Posterior vena cava (tissue), 2 donors: ENCODE measurements at regions of chr16 and their contacts with region 1.

Region 1: GRCh38 chr16:89489040-89489721 is 1.2 kb downstream of the ANKRD11 start:
- DNase-seq: peak; percentile 95

Region 2: GRCh38 chr16:89410794-89411309 is 78.3 kb before region 1 on chr16:
- intact Hi-C with region 1: loop called (anchors 5 to 10 kb)
- DNase-seq: peak; percentile 87

Region 3: DNA sequence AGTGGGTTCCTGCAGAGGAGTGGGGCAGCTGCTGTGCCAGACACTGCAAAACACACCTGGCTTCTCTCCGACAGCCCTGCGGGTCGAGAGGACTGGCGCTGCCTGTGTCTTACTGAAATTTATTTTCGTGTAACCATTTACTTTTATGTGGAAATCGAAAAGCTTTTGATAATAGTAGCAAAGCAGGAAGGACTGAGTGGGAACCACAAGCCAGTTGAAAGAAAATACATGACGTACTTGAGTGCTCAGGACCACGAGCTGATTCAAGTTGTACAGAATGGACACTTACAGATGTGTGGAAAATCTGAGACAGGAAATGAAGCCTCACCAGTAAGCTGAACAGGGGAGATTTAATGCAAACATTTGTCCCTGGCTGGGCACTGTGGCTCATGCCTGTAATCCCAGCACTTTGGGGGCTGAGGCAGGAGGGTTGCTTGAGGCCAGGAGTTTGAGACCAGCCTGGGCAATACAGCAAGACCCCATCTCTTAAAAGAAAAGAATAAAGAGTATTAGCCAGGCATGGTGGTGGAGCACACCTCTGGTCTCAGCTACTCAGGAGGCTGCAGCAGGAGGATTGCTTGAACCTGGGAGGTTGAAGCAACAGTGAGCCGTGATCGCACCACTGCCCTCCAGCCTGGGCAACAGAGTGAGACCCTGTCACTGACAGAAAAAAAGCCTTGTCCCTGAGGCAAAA is 60.0 kb after region 1 on chr16:
- intact Hi-C with region 1: no loop called
- DNase-seq: no peak